Pancreas (tissue), 10 donors: ENCODE measurements at regions of chr12 and their contacts with region 1.

Region 1: GRCh38 chr12:1583421-1584078 is 10.8 kb downstream of the FBXL14 start:
- DNase-seq: peak in 3 of 6 donors; percentile 46 to 70 (median 65)
- ATAC-seq: peak; percentile 84 to 96 (median 93)
- H3K4me3 ChIP-seq: peak overlapping the region in 1 of 4 donors; percentile 4
- H3K27ac ChIP-seq: no peak overlapping the region
- H3K4me1 ChIP-seq: peaks cover 0 to 4% (median 0%) of the 10 kb centered on the region in 3 donors
- H3K27me3 ChIP-seq: no peaks in the 10 kb centered on the region
- CTCF ChIP-seq: peak; percentile 31 to 78 (median 74)

Region 2: DNA sequence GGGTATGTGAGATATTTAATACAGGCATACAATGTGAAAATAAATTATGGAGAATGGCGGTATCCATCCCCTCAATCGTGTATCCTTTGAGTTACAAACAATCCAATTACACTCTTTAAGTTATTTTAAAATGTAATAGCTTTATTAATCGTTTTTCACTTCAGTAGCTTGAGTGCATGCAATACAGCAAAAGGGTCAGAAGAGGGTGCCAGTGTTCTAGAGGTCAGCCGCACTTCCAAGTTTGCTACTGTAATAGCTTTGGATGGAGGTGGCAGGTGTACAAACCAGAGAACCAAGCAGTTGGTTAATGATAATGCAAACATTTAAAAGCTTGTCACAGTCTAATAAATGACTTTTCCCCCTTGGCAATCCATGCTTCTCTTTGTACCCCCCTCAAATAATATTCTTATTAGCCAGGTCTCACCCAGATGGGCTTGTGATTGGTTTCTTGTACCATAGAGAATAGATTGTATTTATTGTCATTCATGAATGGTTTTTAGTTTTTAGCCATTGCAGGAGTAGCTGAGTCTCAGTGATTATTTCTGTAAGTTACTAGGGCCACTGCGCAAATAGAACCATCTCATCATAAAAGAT is 465.5 kb before region 1 on chr12:
- intact Hi-C with region 1: loop called in 2 of 3 experiments (anchors 5 kb)
- DNase-seq: peak; percentile 58 to 83 (median 68)
- ATAC-seq: peak; percentile 68 to 99 (median 93)
- H3K4me3 ChIP-seq: no peak overlapping the region
- H3K27ac ChIP-seq: no peak overlapping the region
- H3K4me1 ChIP-seq: peaks cover 0 to 3% (median 0%) of the 10 kb centered on the region in 3 donors
- H3K27me3 ChIP-seq: no peaks in the 10 kb centered on the region
- CTCF ChIP-seq: peak; percentile 74 to 95 (median 86)

Region 3: GRCh38 chr12:1463073-1463905 is 120.3 kb before region 1 on chr12:
- intact Hi-C with region 1: no loop called
- DNase-seq: no peak
- ATAC-seq: no peak
- H3K4me3 ChIP-seq: no peak overlapping the region
- H3K27ac ChIP-seq: no peak overlapping the region
- H3K4me1 ChIP-seq: no peaks in the 10 kb centered on the region
- H3K27me3 ChIP-seq: no peaks in the 10 kb centered on the region
- CTCF ChIP-seq: no peak